ENCODE measurements at regions of chr10 and their contacts with region 1.

Region 1: GRCh38 chr10:5423771-5424170 is 11.4 kb downstream of the NET1 start:
- DNase-seq: no peak
- H3K4me3 Mint-ChIP-seq: no peak overlapping the region
- H3K27ac Mint-ChIP-seq: no peak overlapping the region
- H3K4me1 Mint-ChIP-seq: peaks cover 23% of the 10 kb centered on the region
- H3K27me3 Mint-ChIP-seq: no peaks in the 10 kb centered on the region
- CTCF ChIP-seq: no peak

Region 2: DNA sequence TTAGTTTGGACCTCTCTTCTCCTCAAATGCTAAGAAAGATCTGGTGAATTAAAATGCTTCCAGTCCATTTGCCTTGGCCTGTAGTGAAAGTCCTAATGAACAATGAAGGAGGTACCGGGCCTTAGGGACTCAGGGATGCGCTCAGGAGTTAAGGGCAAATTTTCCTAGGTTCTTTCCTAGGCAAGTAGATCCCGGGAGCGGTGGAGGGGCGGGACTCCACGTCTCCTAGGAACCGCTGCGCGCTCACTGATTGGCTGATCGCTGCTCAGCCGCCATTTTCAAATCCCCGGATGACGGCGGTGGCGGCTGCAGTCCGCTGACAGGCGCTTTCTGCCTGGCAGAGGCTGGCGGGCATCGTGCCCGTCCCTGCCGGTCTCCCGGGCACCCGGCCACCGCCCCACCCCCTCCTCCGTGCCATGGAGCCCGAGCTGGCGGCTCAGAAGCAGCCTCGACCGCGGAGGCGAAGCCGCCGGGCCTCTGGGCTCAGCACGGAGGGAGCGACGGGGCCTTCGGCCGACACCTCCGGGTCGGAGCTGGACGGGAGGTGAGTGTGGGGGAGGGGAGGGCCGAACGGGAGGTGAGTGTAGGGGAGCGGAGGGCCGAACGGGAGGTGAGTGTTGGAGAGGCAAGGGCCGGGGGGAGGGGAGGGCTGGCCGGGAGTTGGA is 11.4 kb before region 1 on chr10 and contains the start of gene NET1:
- CTCF ChIA-PET with region 1: interaction called, 7 read pairs
- POLR2A ChIA-PET with region 1: interaction called, 54 read pairs
- intact Hi-C with region 1: no loop called
- DNase-seq: peak; percentile 91
- H3K4me3 Mint-ChIP-seq: no peak within 1 kb of the TSS
- H3K27ac Mint-ChIP-seq: no peak within 1 kb of the TSS
- H3K4me1 Mint-ChIP-seq: no peaks in the 10 kb centered on the region
- H3K27me3 Mint-ChIP-seq: no peaks in the 10 kb centered on the region
- CTCF ChIP-seq: no peak
- total RNA-seq, gene NET1: 32.3 and 40.3 TPM in 2 replicates